ENCODE measurements at regions of chr16 and their contacts with region 1.

Region 1: GRCh38 chr16:67393035-67393787 is at the start of gene TPPP3:
- DNase-seq: peak; percentile 32
- H3K4me3 ChIP-seq: no peak within 1 kb of the TSS
- H3K27ac ChIP-seq: no peak within 1 kb of the TSS
- H3K4me1 ChIP-seq: peaks cover 37% of the 10 kb centered on the region
- H3K27me3 ChIP-seq: no peaks in the 10 kb centered on the region
- CTCF ChIP-seq: peak; percentile 28 to 50
- total RNA-seq, gene TPPP3: not detected

Region 2: DNA sequence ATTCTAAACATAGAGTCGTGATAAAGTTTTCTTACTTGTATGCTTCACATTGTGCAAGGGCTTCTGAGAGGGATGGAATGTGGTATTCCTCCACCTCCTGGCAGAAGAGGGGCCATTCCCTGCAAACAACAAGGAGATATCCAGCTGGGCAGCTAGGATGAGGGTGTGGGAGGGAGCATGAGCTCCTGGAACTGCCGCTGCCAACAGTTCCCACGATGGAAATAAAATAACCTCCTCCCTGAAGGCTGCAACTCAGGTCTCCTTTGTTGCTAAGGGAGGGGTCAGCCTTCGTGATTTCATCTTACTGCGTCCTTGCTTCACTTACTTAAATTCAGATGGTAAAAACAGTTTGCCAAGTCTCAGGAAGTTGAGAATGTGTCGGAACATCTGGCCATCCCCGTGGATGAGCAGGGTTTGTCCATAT is 98.3 kb before region 1 on chr16:
- CTCF ChIA-PET with region 1: no interaction called
- dilution Hi-C with region 1: loop called (anchors 5 kb)
- in situ Hi-C with region 1: no loop called
- intact Hi-C with region 1: no loop called
- DNase-seq: no peak
- H3K4me3 ChIP-seq: no peak overlapping the region
- H3K27ac ChIP-seq: no peak overlapping the region
- H3K4me1 ChIP-seq: no peaks in the 10 kb centered on the region
- H3K27me3 ChIP-seq: peaks cover 11% of the 10 kb centered on the region
- CTCF ChIP-seq: no peak

Region 3: GRCh38 chr16:67326472-67327309 is 66.5 kb before region 1 on chr16 and contains the starts of genes KCTD19 and LRRC36:
- CTCF ChIA-PET with region 1: no interaction called
- dilution Hi-C with region 1: loop called (anchors 5 kb)
- in situ Hi-C with region 1: no loop called
- intact Hi-C with region 1: no loop called
- DNase-seq: no peak
- H3K4me3 ChIP-seq: peak within 1 kb of the TSS in 2 of 3 experiments; percentile 22 to 37
- H3K27ac ChIP-seq: no peak within 1 kb of the TSS
- H3K4me1 ChIP-seq: no peaks in the 10 kb centered on the region
- H3K27me3 ChIP-seq: peaks cover 4% of the 10 kb centered on the region
- CTCF ChIP-seq: peak; percentile 4 to 40
- total RNA-seq, gene KCTD19: not detected
- total RNA-seq, gene LRRC36: not detected

Region 4: DNA sequence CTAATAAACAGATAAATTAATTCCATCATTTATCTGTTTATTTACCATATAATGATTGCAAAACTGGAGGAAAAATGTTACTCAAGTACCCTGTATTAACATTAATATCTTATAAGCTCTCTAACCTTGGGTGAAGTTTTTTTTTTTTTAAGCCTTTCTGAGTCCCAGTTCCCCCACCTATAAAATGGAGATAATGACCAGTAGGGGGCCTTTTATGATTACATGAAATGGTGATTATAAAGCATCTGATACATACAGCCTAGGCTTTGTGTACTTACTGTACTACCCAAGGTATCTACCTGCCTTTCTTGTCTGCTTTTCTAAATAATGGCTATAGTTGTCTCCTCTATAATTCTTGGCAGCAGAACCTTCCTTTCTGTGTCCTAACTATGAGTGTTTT is 44.0 kb before region 1 on chr16:
- CTCF ChIA-PET with region 1: no interaction called
- dilution Hi-C with region 1: loop called (anchors 5 kb)
- in situ Hi-C with region 1: no loop called
- intact Hi-C with region 1: no loop called
- DNase-seq: peak; percentile 20
- H3K4me3 ChIP-seq: no peak overlapping the region
- H3K27ac ChIP-seq: no peak overlapping the region
- H3K4me1 ChIP-seq: no peaks in the 10 kb centered on the region
- H3K27me3 ChIP-seq: no peaks in the 10 kb centered on the region
- CTCF ChIP-seq: peak; percentile 52 to 55

Region 5: DNA sequence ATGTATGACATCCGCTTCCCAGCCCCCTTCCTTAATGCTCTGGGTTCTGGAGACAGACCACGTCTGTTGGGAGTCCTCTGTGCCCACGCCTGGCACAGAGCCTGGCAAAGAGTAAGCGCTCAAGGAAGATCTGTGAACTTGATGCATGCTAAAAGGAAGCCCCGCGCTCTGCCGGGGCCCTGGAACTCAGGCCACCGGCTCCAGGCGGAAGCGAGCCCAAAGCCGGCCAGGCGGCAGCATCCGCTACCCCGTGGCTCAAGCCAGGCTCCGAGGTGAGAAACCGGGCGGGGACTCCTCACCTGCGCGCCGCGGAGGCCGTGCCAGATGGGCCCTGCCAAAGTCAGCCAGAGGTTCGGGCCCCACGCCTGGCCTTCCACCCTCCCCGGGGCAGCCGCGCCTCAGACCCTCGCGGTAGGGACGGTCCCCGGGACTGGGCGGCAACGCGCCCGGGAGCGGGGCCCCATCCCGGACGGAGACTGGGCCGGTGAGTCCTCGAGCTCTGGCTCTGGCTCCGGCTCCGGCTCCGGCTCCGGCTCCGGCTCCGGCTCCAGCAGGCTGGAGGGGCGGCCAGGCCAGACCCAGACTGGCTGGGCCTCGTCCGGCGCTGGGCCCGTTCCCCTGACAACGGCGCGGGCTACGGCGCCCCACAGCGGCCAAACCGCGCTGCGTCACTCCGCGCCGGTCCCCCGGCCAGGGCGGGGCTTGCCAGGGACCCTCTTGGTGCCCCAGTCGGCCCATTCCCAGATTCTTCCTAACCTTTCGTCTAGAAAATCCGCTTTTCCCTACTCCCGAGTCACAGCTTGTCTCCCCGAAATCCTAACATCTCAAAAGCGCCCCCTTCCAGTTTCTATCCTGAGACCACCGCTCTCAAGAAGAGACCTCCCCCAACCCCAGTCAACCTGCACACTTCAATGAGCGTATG is 22.9 kb after region 1 on chr16 and contains the start of gene ZDHHC1:
- CTCF ChIA-PET with region 1: interaction called, 3 read pairs
- dilution Hi-C with region 1: no loop called
- in situ Hi-C with region 1: no loop called
- intact Hi-C with region 1: loop called (anchors 1 kb)
- DNase-seq: peak; percentile 53
- H3K4me3 ChIP-seq: peak within 1 kb of the TSS; percentile 54 to 74 (median 62)
- H3K27ac ChIP-seq: peak within 1 kb of the TSS; percentile 59
- H3K4me1 ChIP-seq: peaks cover 7% of the 10 kb centered on the region
- H3K27me3 ChIP-seq: no peaks in the 10 kb centered on the region
- CTCF ChIP-seq: peak; percentile 47 to 66
- total RNA-seq, gene ZDHHC1: 5.3 to 6.3 TPM

Region 6: GRCh38 chr16:67441271-67441753 is 48.1 kb after region 1 on chr16:
- CTCF ChIA-PET with region 1: no interaction called
- dilution Hi-C with region 1: loop called (anchors 5 kb)
- in situ Hi-C with region 1: no loop called
- intact Hi-C with region 1: no loop called
- DNase-seq: no peak
- H3K4me3 ChIP-seq: no peak overlapping the region
- H3K27ac ChIP-seq: no peak overlapping the region
- H3K4me1 ChIP-seq: no peaks in the 10 kb centered on the region
- H3K27me3 ChIP-seq: no peaks in the 10 kb centered on the region
- CTCF ChIP-seq: no peak

Region 7: GRCh38 chr16:67480833-67481560 is 87.8 kb after region 1 on chr16 and contains the start of gene ATP6V0D1:
- CTCF ChIA-PET with region 1: no interaction called
- dilution Hi-C with region 1: no loop called
- in situ Hi-C with region 1: no loop called
- intact Hi-C with region 1: no loop called
- DNase-seq: peak; percentile 97
- H3K4me3 ChIP-seq: peak within 1 kb of the TSS; percentile 81 to 97 (median 95)
- H3K27ac ChIP-seq: peak within 1 kb of the TSS; percentile 93
- H3K4me1 ChIP-seq: peaks cover 18% of the 10 kb centered on the region
- H3K27me3 ChIP-seq: no peaks in the 10 kb centered on the region
- CTCF ChIP-seq: peak; percentile 69 to 89
- total RNA-seq, gene ATP6V0D1: 93.3 to 124 TPM

Measured in mammary epithelial cell (primary cell).